ENCODE measurements at regions of chr19 and their contacts with region 1.

Region 1: GRCh38 chr19:53844849-53845246 is 20.7 kb upstream of the NLRP12 start:
- DNase-seq: no peak
- H3K4me3 ChIP-seq: no peak overlapping the region
- H3K27ac ChIP-seq: no peak overlapping the region
- H3K4me1 ChIP-seq: peaks cover 6 to 8% of the 10 kb centered on the region in 2 donors
- H3K27me3 ChIP-seq: no peaks in the 10 kb centered on the region
- CTCF ChIP-seq: no peak
- POLR2A ChIP-seq: no peak

Region 2: GRCh38 chr19:54002495-54003315 is 157.9 kb after region 1 on chr19:
- intact Hi-C with region 1: no loop called
- DNase-seq: no peak
- H3K4me3 ChIP-seq: no peak overlapping the region
- H3K27ac ChIP-seq: no peak overlapping the region
- H3K4me1 ChIP-seq: no peaks in the 10 kb centered on the region
- H3K27me3 ChIP-seq: no peaks in the 10 kb centered on the region
- CTCF ChIP-seq: no peak
- POLR2A ChIP-seq: no peak

Region 3: GRCh38 chr19:54023191-54023590 is 178.3 kb after region 1 on chr19:
- intact Hi-C with region 1: loop called (anchors 5 kb)
- DNase-seq: no peak
- H3K4me3 ChIP-seq: no peak overlapping the region
- H3K27ac ChIP-seq: no peak overlapping the region
- H3K4me1 ChIP-seq: no peaks in the 10 kb centered on the region
- H3K27me3 ChIP-seq: no peaks in the 10 kb centered on the region
- CTCF ChIP-seq: no peak
- POLR2A ChIP-seq: no peak

Measured in thyroid gland (tissue), 4 donors.